Caco-2 (cell line): ENCODE measurements at regions of chr6 and their contacts with region 1.

Region 1: DNA sequence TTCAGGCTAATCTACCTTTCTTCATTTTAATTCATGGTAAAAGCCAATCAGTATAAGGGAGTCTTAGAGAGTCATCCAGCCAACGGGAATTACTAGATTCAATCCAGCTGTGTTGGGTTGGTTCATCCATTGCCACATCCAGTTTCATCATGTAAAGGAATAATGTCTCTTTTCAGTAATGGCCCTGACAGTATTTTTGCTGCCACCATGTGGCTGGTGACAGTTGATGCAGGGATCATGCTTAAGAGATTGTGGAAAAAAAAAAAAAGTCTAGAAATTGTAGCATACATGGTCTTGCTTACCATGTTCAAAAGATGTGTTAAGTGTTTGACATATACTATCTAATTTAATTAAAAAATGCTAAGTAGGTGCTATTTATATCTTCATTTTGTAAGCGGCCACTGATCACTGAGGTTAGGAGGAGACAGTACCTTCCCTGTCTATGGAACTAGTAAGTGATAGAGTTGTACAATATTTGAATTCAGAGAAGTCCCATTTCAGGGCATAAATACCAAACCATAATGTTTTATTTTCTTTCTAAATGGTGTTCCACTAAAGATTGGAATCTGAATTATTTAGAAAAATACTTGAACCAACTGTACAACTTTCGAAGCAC is 135.9 kb downstream of the KHDRBS2 start:
- DNase-seq: peak in 1 of 2 experiments; percentile 52
- H3K4me3 ChIP-seq: no peak overlapping the region
- H3K4me3 Mint-ChIP-seq: no peak overlapping the region
- H3K27ac Mint-ChIP-seq: no peak overlapping the region
- H3K4me1 ChIP-seq: no peaks in the 10 kb centered on the region
- H3K4me1 Mint-ChIP-seq: no peaks in the 10 kb centered on the region
- H3K27me3 ChIP-seq: no peaks in the 10 kb centered on the region
- H3K27me3 Mint-ChIP-seq: no peaks in the 10 kb centered on the region
- CTCF ChIP-seq: peak; percentile 55 to 74

Region 2: GRCh38 chr6:61809004-61809595 is 341.1 kb before region 1 on chr6:
- CTCF ChIA-PET with region 1: no interaction called
- POLR2A ChIA-PET with region 1: no interaction called
- intact Hi-C with region 1: loop called (anchors 1 kb)
- DNase-seq: peak in 1 of 2 experiments; percentile 37
- H3K4me3 ChIP-seq: no peak overlapping the region
- H3K4me3 Mint-ChIP-seq: no peak overlapping the region
- H3K27ac Mint-ChIP-seq: no peak overlapping the region
- H3K4me1 ChIP-seq: no peaks in the 10 kb centered on the region
- H3K4me1 Mint-ChIP-seq: no peaks in the 10 kb centered on the region
- H3K27me3 ChIP-seq: no peaks in the 10 kb centered on the region
- H3K27me3 Mint-ChIP-seq: no peaks in the 10 kb centered on the region
- CTCF ChIP-seq: peak; percentile 52 to 53

Region 3: DNA sequence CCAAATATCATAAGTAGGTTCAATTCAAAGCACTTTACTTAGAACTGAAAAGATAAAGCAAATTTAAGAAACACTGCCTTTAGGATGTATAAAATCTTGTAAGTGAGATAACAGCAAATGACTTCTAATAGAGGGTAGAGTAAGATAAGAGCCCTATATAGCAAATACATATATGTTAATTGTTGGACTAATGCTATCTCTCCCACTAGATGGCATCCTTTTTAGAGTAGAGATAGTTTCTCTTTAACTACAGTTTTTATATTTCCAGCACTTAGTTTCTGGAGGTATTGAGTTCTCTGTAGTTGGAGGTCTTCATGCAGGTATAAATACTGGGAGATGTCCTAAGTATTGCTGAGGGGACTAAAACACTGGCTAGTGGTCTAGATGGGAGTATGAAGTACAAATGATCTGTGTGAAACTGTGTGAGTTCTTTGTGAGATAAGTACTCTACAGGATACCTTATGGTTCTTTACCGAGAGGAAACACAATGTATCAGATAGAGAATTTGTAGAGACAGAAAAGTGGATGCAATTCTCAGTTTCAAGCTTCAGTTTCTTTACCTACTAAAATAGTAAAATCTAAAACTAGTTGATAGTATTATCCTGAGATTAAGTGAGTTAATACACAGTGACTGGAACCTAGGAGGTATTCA is 263.4 kb before region 1 on chr6:
- CTCF ChIA-PET with region 1: no interaction called
- POLR2A ChIA-PET with region 1: no interaction called
- intact Hi-C with region 1: loop called (anchors 1 kb)
- DNase-seq: no peak
- H3K4me3 ChIP-seq: no peak overlapping the region
- H3K4me3 Mint-ChIP-seq: no peak overlapping the region
- H3K27ac Mint-ChIP-seq: no peak overlapping the region
- H3K4me1 ChIP-seq: no peaks in the 10 kb centered on the region
- H3K4me1 Mint-ChIP-seq: no peaks in the 10 kb centered on the region
- H3K27me3 ChIP-seq: no peaks in the 10 kb centered on the region
- H3K27me3 Mint-ChIP-seq: peaks cover 2% of the 10 kb centered on the region
- CTCF ChIP-seq: peak; percentile 16 to 24

Region 4: DNA sequence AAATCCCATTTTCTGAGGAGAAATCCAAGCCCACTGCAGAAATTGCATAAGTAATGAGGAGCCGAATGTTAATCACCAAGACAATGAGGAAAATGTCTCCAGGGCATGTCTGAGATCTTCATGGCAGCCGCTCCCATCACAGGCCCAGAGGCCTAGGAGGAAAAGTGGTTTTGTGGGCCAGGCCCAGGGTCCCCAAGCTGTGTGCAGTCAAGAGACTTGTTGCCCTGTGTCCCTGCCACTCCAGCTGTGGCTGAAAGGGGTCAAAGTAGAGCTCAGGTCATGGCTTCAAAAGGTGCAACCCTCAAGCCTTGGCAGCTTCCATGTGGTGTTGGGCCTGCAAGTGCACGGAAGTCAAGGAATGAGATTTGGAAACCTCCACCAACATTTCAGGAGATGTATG is 140.7 kb before region 1 on chr6:
- CTCF ChIA-PET with region 1: no interaction called
- POLR2A ChIA-PET with region 1: no interaction called
- intact Hi-C with region 1: no loop called
- DNase-seq: no peak
- H3K4me3 ChIP-seq: no peak overlapping the region
- H3K4me3 Mint-ChIP-seq: no peak overlapping the region
- H3K27ac Mint-ChIP-seq: no peak overlapping the region
- H3K4me1 ChIP-seq: no peaks in the 10 kb centered on the region
- H3K4me1 Mint-ChIP-seq: no peaks in the 10 kb centered on the region
- H3K27me3 ChIP-seq: no peaks in the 10 kb centered on the region
- H3K27me3 Mint-ChIP-seq: no peaks in the 10 kb centered on the region
- CTCF ChIP-seq: no peak

Region 5: GRCh38 chr6:62035952-62036351 is 114.2 kb before region 1 on chr6:
- CTCF ChIA-PET with region 1: no interaction called
- POLR2A ChIA-PET with region 1: no interaction called
- intact Hi-C with region 1: loop called (anchors 1 kb)
- DNase-seq: no peak
- H3K4me3 ChIP-seq: no peak overlapping the region
- H3K4me3 Mint-ChIP-seq: no peak overlapping the region
- H3K27ac Mint-ChIP-seq: no peak overlapping the region
- H3K4me1 ChIP-seq: no peaks in the 10 kb centered on the region
- H3K4me1 Mint-ChIP-seq: no peaks in the 10 kb centered on the region
- H3K27me3 ChIP-seq: no peaks in the 10 kb centered on the region
- H3K27me3 Mint-ChIP-seq: no peaks in the 10 kb centered on the region
- CTCF ChIP-seq: peak in 1 of 2 experiments; percentile 1

Region 6: GRCh38 chr6:62119401-62119800 is 30.8 kb before region 1 on chr6:
- CTCF ChIA-PET with region 1: no interaction called
- POLR2A ChIA-PET with region 1: no interaction called
- intact Hi-C with region 1: no loop called
- DNase-seq: no peak
- H3K4me3 ChIP-seq: no peak overlapping the region
- H3K4me3 Mint-ChIP-seq: no peak overlapping the region
- H3K27ac Mint-ChIP-seq: no peak overlapping the region
- H3K4me1 ChIP-seq: no peaks in the 10 kb centered on the region
- H3K4me1 Mint-ChIP-seq: no peaks in the 10 kb centered on the region
- H3K27me3 ChIP-seq: no peaks in the 10 kb centered on the region
- H3K27me3 Mint-ChIP-seq: no peaks in the 10 kb centered on the region
- CTCF ChIP-seq: no peak

Region 7: GRCh38 chr6:62246087-62246486 is 95.9 kb after region 1 on chr6:
- CTCF ChIA-PET with region 1: no interaction called
- POLR2A ChIA-PET with region 1: no interaction called
- intact Hi-C with region 1: no loop called
- DNase-seq: no peak
- H3K4me3 ChIP-seq: no peak overlapping the region
- H3K4me3 Mint-ChIP-seq: no peak overlapping the region
- H3K27ac Mint-ChIP-seq: no peak overlapping the region
- H3K4me1 ChIP-seq: no peaks in the 10 kb centered on the region
- H3K4me1 Mint-ChIP-seq: no peaks in the 10 kb centered on the region
- H3K27me3 ChIP-seq: no peaks in the 10 kb centered on the region
- H3K27me3 Mint-ChIP-seq: no peaks in the 10 kb centered on the region
- CTCF ChIP-seq: no peak